Activated CD8-positive, alpha-beta memory T cell treated with anti-CD3 and anti-CD28 coated beads, Interleukin-2, amount 10 ng/mL, durations not matched to agents 7 days and 5 days (primary cell): ENCODE measurements at regions of chr11 and their contacts with region 1.

Region 1: DNA sequence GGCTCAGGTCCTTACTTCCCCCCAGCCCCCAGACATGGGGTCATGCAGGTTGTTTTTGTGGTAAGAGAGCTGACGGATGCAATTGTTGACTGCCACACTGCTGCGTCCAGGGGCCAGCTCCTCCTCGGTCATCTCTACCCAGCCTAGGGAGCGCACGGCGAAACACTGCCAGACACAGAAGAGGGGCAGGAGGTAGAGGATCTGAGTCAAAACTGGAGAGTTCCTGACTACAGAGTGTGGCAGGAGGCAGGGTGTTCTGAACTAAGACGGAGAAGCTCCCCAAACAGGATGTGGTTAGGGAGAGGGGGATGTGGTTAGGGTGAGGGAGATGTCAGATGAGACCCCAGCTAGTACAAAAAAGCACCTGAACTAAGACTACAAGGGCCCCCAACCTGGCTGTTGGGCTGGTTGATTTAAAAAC is 12.3 kb downstream of the SMPD1 start:
- DNase-seq: peak; percentile 96
- ATAC-seq: peak; percentile 90
- H3K4me3 Mint-ChIP-seq: peak overlapping the region; percentile 73
- H3K27ac Mint-ChIP-seq: peak overlapping the region; percentile 96
- H3K4me1 Mint-ChIP-seq: peaks cover 62% of the 10 kb centered on the region
- H3K27me3 Mint-ChIP-seq: no peaks in the 10 kb centered on the region

Region 2: DNA sequence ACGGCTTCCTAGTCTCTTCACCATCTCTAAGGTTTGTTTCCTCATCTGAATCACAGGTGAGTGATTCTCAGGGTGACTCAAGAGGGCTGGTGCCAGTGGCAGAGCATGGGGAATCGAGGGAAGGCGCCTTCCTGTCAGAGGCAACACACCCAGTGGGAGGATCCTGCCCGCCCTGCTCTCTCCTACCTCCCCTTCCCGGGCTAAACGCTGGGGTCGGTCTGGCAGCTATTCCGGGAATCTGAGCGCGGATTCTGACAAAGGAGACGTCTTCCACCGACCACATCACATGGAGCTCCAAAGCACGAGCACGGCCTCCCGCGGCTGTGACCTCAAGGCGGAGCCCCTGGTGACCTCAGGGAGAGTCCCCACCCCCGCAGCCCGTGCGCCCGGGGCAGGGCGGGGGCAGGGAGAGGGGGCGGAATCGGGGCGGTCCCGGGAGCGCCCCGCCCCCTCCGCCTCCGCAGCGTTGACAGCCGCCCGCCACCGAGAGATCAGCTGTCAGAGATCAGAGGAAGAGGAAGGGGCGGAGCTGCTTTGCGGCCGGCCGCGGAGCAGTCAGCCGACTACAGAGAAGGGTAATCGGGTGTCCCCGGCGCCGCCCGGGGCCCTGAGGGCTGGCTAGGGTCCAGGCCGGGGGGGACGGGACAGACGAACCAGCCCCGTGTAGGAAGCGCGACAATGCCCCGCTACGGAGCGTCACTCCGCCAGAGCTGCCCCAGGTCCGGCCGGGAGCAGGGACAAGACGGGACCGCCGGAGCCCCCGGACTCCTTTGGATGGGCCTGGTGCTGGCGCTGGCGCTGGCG is 12.4 kb before region 1 on chr11 and contains the start of gene SMPD1:
- CTCF ChIA-PET with region 1: interaction called, 25 read pairs
- DNase-seq: peak; percentile 97
- ATAC-seq: peak; percentile 92
- H3K4me3 Mint-ChIP-seq: peak within 1 kb of the TSS; percentile 91
- H3K27ac Mint-ChIP-seq: peak within 1 kb of the TSS; percentile 94
- H3K4me1 Mint-ChIP-seq: peaks cover 38% of the 10 kb centered on the region
- H3K27me3 Mint-ChIP-seq: no peaks in the 10 kb centered on the region
- total RNA-seq, gene SMPD1: 38.9 to 41.9 TPM

Region 3: DNA sequence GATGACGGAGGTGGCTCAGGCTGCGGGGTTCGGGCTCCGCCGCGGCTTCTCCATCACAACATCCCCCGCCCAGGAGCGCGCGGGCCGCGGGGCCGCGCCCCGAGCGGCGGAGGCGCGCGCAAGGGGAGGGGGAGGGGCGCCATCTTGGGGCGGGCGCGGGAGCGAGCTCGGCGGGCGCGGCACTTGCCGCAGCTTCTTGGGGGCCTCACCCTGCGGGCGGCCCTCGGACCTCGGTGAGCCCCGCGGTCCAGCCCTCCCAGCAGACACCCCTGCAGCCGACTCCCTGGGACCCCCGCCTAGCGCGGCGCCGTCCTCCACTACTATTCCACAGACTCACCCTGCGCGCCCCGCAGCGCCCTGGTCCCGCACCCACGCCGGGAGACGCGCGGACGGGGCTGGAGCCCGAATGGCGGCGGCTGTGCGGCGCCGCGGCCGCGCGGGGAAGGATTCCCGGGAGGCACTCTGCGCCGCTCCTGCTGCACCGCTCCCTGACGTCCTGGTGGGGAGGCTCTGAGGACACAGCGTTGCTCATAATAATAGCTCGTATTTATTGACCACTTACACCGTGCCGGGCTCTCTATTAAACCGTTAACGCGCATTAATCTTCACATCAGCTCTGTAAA is 16.5 kb after region 1 on chr11 and contains the start of gene APBB1:
- CTCF ChIA-PET with region 1: interaction called, 26 read pairs
- DNase-seq: peak; percentile 72
- ATAC-seq: peak; percentile 79
- H3K4me3 Mint-ChIP-seq: no peak within 1 kb of the TSS
- H3K27ac Mint-ChIP-seq: peak within 1 kb of the TSS; percentile 30
- H3K4me1 Mint-ChIP-seq: peaks cover 6% of the 10 kb centered on the region
- H3K27me3 Mint-ChIP-seq: peaks cover 28% of the 10 kb centered on the region
- total RNA-seq, gene APBB1: 38.7 to 43.4 TPM

Region 4: GRCh38 chr11:6455070-6455469 is 52.5 kb after region 1 on chr11:
- CTCF ChIA-PET with region 1: no interaction called
- DNase-seq: no peak
- ATAC-seq: no peak
- H3K4me3 Mint-ChIP-seq: no peak overlapping the region
- H3K27ac Mint-ChIP-seq: no peak overlapping the region
- H3K4me1 Mint-ChIP-seq: no peaks in the 10 kb centered on the region
- H3K27me3 Mint-ChIP-seq: no peaks in the 10 kb centered on the region